PC-9 (cell line): ENCODE measurements at regions of chr6 and their contacts with region 1.

Region 1: DNA sequence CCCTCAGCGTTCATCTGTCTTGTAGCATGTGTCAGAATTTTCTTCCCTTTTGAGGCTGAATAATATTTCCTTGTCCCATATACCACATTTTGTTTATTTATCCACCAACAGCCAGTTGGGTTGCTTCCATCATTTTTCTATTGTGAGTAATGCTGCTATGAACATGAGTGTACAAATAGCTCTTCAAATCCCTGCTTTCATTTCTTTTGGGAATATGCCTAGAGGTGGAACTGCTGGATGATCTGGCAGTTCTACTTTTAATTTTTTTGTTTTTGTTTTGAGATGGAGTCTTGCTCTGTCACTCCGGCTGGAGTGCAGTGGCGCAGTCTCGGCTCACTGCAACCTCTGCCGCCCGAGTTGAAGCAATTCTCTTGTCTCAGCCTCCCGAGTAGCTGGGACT is 64.7 kb downstream of the SASH1 start:
- DNase-seq: peak; percentile 9 to 86
- H3K4me3 ChIP-seq: no peak overlapping the region
- H3K27ac ChIP-seq: peak overlapping the region; percentile 47
- H3K4me1 ChIP-seq: peaks cover 45% of the 10 kb centered on the region
- H3K27me3 ChIP-seq: no peaks in the 10 kb centered on the region
- CTCF ChIP-seq: no peak

Region 2: GRCh38 chr6:147868427-147869190 is 538.8 kb before region 1 on chr6:
- CTCF ChIA-PET with region 1: no interaction called
- POLR2A ChIA-PET with region 1: no interaction called
- intact Hi-C with region 1: no loop called
- DNase-seq: no peak
- H3K4me3 ChIP-seq: no peak overlapping the region
- H3K27ac ChIP-seq: no peak overlapping the region
- H3K4me1 ChIP-seq: no peaks in the 10 kb centered on the region
- H3K27me3 ChIP-seq: no peaks in the 10 kb centered on the region
- CTCF ChIP-seq: no peak

Region 3: GRCh38 chr6:148440877-148441453 is 33.6 kb after region 1 on chr6:
- CTCF ChIA-PET with region 1: interaction called, 10 read pairs
- POLR2A ChIA-PET with region 1: no interaction called
- intact Hi-C with region 1: loop called (anchors 1 kb)
- DNase-seq: peak; percentile 59 to 91
- H3K4me3 ChIP-seq: no peak overlapping the region
- H3K27ac ChIP-seq: peak overlapping the region; percentile 85
- H3K4me1 ChIP-seq: peaks cover 58% of the 10 kb centered on the region
- H3K27me3 ChIP-seq: no peaks in the 10 kb centered on the region
- CTCF ChIP-seq: no peak